ENCODE measurements at regions of chr1 and their contacts with region 1.

Region 1: GRCh38 chr1:171654942-171655745 is 2.7 kb upstream of the MYOC start:
- DNase-seq: peak; percentile 62 to 71 (median 63)
- ATAC-seq: peak; percentile 62
- H3K4me3 ChIP-seq: no peak overlapping the region
- H3K4me1 ChIP-seq: no peaks in the 10 kb centered on the region
- CTCF ChIP-seq: peak; percentile 20

Region 2: GRCh38 chr1:171715813-171716251 is 60.7 kb after region 1 on chr1:
- intact Hi-C with region 1: loop called in 1 of 2 experiments (anchors 10 kb)
- DNase-seq: no peak
- ATAC-seq: no peak
- H3K4me3 ChIP-seq: no peak overlapping the region
- H3K4me1 ChIP-seq: peaks cover 6% of the 10 kb centered on the region
- CTCF ChIP-seq: no peak

Region 3: GRCh38 chr1:171852272-171852671 is 197.1 kb after region 1 on chr1:
- intact Hi-C with region 1: no loop called
- DNase-seq: no peak
- ATAC-seq: no peak
- H3K4me3 ChIP-seq: no peak overlapping the region
- H3K4me1 ChIP-seq: no peaks in the 10 kb centered on the region
- CTCF ChIP-seq: no peak